Activated CD4-positive, alpha-beta T cell treated with anti-CD3 and anti-CD28 coated beads for 36 hours (primary cell): ENCODE measurements at regions of chr7 and their contacts with region 1.

Region 1: DNA sequence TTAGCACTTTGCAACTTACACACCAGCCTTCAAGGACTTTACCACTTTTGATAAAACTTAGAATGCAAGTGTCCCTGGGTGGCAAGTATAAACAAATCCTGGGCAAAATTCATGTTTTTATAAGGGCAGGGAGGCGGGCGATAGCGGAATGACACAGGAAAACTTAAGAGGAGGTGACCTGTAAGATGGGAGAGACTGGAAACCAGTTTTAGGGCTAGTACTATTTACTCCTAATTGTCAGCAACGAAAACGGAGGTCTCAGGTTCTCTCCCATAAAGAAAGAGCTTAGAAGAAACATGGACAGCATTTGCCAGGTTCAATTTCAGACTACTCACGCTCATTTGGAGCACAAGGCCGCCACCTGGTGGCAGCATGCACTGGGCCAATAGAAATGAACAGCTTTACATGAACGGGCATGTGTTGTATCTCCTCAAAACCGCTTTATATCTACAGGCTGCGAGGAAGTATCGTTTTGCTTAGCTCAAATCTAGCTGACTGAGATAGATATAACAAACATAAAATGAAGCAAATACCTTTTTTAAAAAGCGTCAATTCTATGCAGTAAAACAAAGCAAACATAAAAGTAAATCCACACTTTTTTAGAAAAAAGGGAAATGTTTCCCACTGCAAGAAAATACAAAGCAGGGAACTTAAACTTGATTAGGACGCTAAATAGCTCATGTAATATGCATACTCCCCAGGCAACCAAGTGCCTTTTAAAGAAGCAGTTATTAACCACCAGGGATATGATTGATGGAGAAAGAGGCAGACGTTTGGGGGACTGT is 37.6 kb upstream of the SVOPL start:
- DNase-seq: peak; percentile 90
- ATAC-seq: peak; percentile 94
- H3K4me3 Mint-ChIP-seq: no peak overlapping the region
- H3K27ac Mint-ChIP-seq: no peak overlapping the region
- H3K4me1 Mint-ChIP-seq: peaks cover 2% of the 10 kb centered on the region
- H3K27me3 Mint-ChIP-seq: no peaks in the 10 kb centered on the region

Region 2: DNA sequence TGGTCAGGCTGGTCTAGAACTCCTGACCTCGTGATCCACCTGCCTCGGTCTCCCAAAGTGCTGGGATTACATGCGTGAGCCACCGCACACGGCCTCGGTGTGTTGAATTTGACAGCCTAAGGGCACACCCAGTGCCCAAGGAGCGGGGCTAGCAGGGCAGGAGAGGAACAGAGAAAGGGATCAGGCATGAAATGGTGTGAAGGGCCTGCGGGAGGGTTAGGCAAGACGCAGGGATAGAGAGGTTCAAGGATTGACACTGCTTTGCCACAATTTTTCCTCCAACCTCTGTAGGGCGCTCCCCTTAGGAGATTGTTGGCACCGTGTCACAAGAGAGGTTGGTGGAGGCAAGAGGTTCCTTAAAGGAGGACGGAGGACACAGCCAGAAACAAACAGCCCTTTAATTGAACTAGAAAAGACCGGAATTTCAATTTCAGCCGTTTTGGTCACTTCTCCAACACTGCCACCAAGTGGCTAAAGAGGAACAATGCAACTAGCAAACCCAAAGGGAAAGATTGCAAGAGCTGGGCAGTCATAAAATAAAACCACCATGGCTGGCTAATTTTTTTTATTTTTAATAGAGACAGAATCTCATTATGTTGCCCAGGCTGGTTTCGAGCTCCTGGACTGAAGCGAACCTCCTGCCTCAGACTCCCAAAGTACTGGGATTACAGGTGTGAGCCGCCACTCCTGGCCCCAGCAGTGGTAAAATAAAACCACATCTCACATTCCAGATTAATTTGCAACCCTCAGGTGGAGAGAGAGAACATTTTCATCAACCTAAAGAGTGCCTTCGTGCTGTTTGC is 730.0 kb before region 1 on chr7:
- CTCF ChIA-PET with region 1: no interaction called
- POLR2A ChIA-PET with region 1: no interaction called
- intact Hi-C with region 1: loop called in 1 of 2 experiments (anchors 2 kb)
- DNase-seq: peak; percentile 29
- ATAC-seq: peak; percentile 53
- H3K4me3 Mint-ChIP-seq: no peak overlapping the region
- H3K27ac Mint-ChIP-seq: no peak overlapping the region
- H3K4me1 Mint-ChIP-seq: peaks cover 3% of the 10 kb centered on the region
- H3K27me3 Mint-ChIP-seq: peaks cover 2% of the 10 kb centered on the region

Region 3: GRCh38 chr7:138097064-138097741 is 641.5 kb before region 1 on chr7:
- CTCF ChIA-PET with region 1: no interaction called
- POLR2A ChIA-PET with region 1: no interaction called
- intact Hi-C with region 1: loop called (anchors 2 to 5 kb)
- DNase-seq: peak; percentile 38
- ATAC-seq: peak; percentile 16
- H3K4me3 Mint-ChIP-seq: no peak overlapping the region
- H3K27ac Mint-ChIP-seq: no peak overlapping the region
- H3K4me1 Mint-ChIP-seq: no peaks in the 10 kb centered on the region
- H3K27me3 Mint-ChIP-seq: peaks cover 8% of the 10 kb centered on the region

Region 4: DNA sequence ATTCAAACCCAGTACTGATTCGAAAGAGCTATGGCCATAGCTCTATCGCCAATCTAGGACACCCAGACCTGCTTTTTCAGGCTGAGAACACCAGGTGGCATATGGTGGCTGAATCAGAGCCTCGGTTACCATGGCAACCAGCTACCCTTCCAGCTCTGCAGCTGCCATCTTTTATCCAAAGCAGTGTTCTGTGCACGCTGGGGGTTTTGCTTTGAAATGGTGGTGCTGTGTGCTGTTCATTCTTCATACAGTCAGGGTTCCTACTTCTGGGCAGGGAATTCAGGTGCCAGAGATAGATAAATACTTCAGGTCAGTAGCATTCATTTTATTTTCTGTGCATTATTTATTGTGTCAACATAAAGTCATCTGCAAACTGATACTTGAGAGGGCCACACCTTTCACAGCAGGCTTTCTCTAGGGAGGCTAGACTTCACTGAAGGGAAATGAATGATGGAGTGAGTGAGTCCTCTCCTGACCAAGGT is 577.1 kb before region 1 on chr7:
- CTCF ChIA-PET with region 1: interaction called, 24 read pairs
- POLR2A ChIA-PET with region 1: interaction called, 4 read pairs
- intact Hi-C with region 1: loop called (anchors 1 kb)
- DNase-seq: peak; percentile 86
- ATAC-seq: peak; percentile 99
- H3K4me3 Mint-ChIP-seq: no peak overlapping the region
- H3K27ac Mint-ChIP-seq: no peak overlapping the region
- H3K4me1 Mint-ChIP-seq: no peaks in the 10 kb centered on the region
- H3K27me3 Mint-ChIP-seq: no peaks in the 10 kb centered on the region

Region 5: GRCh38 chr7:138449580-138449979 is 289.2 kb before region 1 on chr7:
- CTCF ChIA-PET with region 1: interaction called, 4 read pairs
- POLR2A ChIA-PET with region 1: no interaction called
- intact Hi-C with region 1: loop called in 1 of 2 experiments (anchors 1 kb)
- DNase-seq: peak; percentile 64
- ATAC-seq: no peak
- H3K4me3 Mint-ChIP-seq: no peak overlapping the region
- H3K27ac Mint-ChIP-seq: no peak overlapping the region
- H3K4me1 Mint-ChIP-seq: no peaks in the 10 kb centered on the region
- H3K27me3 Mint-ChIP-seq: no peaks in the 10 kb centered on the region

Region 6: DNA sequence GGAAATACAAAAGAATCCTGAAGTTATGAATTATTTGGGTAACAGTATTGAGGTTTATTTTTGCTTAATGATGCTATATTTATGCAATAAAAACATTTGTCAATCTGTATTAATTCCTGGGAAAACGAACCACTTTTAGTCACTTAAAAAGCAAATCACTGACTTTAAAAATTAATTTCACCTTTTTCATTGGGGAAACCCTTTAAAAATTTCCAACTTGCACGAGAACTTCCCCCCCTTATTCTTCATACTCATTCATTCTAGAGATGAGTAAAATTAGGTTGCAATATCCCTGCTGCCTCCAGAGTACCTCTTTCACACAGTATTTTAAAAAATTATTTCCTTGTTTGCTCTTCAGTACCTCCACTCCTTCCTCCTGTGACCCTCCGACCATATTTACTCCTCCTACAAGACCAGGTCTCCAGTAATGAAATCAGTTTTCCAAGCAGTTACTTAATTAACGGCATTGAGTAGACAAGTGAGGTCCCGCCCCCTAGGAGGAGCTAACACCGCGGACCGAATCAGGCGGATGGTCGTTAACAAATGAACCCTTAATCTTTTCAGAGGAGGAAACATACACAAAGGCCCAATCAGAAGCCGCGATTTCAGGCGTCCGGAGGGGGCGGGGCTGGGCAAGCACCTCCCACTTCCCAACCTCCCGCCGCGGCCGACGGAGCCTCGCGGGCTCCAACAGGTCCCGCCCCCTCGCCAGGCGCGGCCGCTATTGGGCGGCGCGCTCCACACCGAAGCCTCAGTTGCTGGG is 279.1 kb before region 1 on chr7:
- CTCF ChIA-PET with region 1: no interaction called
- POLR2A ChIA-PET with region 1: no interaction called
- intact Hi-C with region 1: loop called (anchors 5 kb)
- DNase-seq: peak; percentile 99
- ATAC-seq: peak; percentile 88
- H3K4me3 Mint-ChIP-seq: peak overlapping the region; percentile 85
- H3K27ac Mint-ChIP-seq: peak overlapping the region; percentile 85
- H3K4me1 Mint-ChIP-seq: peaks cover 25% of the 10 kb centered on the region
- H3K27me3 Mint-ChIP-seq: no peaks in the 10 kb centered on the region

Region 7: DNA sequence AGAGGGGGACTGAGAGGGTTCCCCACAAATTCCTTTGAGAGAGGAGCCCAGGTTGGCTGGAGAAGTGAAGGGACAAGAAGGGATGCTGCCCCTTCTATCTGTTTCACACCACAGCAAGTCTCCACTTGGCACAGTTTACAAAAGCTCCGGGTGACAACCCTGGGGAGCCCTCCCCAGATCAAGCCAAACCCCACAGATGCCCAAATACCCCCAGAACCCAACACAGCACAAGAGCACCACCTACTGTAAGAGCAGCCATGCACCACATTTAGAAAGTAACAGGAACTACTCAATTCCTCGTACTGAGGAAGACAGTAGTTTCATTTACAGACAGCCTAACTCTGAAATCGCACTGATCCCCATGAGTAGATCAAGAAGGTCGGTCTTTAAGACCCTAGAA is 127.1 kb after region 1 on chr7:
- CTCF ChIA-PET with region 1: no interaction called
- POLR2A ChIA-PET with region 1: no interaction called
- intact Hi-C with region 1: loop called (anchors 1 kb)
- DNase-seq: peak; percentile 66
- ATAC-seq: peak; percentile 84
- H3K4me3 Mint-ChIP-seq: no peak overlapping the region
- H3K27ac Mint-ChIP-seq: no peak overlapping the region
- H3K4me1 Mint-ChIP-seq: peaks cover 16% of the 10 kb centered on the region
- H3K27me3 Mint-ChIP-seq: no peaks in the 10 kb centered on the region

Region 8: DNA sequence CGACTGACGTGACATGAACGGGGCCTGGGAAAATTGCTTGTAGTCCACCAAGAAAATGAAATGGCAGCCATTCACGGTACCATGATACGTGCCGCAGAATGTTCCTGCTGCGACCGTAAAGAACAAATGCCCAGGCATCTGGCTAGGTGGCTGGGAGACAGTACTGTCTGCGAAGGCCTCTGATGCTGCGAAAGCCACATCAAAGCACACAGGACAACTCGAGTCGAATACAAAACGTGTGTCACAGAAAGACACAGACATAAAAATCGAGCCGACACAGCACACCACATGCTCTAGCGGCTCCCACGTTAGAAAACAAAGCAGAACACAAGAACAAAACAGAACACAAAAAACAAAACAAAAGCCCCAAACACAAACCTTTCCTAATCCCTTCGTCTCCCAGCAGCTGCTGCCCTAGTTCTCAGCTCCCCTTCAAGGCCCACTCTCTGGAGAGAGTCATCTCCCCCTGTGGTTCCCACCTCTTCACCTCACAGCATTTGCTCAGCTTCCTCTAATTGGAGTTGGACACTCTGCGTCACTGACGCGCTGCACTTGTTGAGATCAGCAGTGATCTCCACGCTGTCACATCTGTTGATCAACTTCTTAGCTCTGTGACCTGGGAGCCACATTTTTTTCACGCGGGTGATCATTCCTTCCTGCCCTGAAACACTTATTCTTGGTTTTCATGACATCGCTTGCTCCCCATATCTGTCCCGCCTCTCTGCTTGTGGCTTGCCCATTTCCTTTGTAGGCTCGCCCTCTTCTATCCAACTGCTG is 897.0 kb after region 1 on chr7:
- CTCF ChIA-PET with region 1: no interaction called
- POLR2A ChIA-PET with region 1: no interaction called
- intact Hi-C with region 1: no loop called
- DNase-seq: peak; percentile 88
- ATAC-seq: peak; percentile 93
- H3K4me3 Mint-ChIP-seq: peak overlapping the region; percentile 74
- H3K27ac Mint-ChIP-seq: peak overlapping the region; percentile 96
- H3K4me1 Mint-ChIP-seq: peaks cover 66% of the 10 kb centered on the region
- H3K27me3 Mint-ChIP-seq: no peaks in the 10 kb centered on the region